Adrenal gland (tissue), 19 donors: ENCODE measurements at regions of chr6 and their contacts with region 1.

Region 1: GRCh38 chr6:14210663-14211561 is 93.3 kb downstream of the CD83 start:
- DNase-seq: peak; percentile 93 to 97 (median 94)
- H3K4me3 ChIP-seq: peak overlapping the region; percentile 46 to 77 (median 65)
- H3K27ac ChIP-seq: peak overlapping the region in 4 of 5 donors; percentile 48 to 86 (median 66)
- H3K4me1 ChIP-seq: peaks cover 7 to 20% of the 10 kb centered on the region in 2 donors
- H3K27me3 ChIP-seq: no peaks in the 10 kb centered on the region
- CTCF ChIP-seq: peak in 5 of 6 experiments; percentile 36 to 99 (median 77)
- POLR2A ChIP-seq: peak; percentile 53 to 54

Region 2: DNA sequence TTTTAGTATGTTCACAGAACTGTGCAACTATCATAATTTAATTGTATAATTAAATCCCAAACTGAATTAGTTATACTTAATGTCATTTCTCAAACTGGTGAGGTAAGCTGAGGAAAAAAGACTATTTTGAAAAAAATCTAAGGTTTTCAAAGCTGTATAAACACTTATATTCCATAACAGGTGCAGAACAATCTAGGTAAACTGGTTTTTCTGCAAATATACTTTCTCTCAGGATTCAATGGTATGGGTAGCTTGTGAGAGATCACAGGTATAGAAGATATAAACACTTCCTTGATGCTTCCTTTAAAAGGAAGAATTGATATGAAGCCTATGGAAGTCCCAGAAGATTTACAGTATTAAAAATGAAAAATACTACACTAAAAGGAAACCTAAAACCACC is 562.1 kb before region 1 on chr6:
- intact Hi-C with region 1: no loop called
- DNase-seq: no peak
- H3K4me3 ChIP-seq: no peak overlapping the region
- H3K27ac ChIP-seq: no peak overlapping the region
- H3K4me1 ChIP-seq: peaks cover 0 to 20% of the 10 kb centered on the region in 2 donors
- H3K27me3 ChIP-seq: no peaks in the 10 kb centered on the region
- CTCF ChIP-seq: no peak
- POLR2A ChIP-seq: no peak

Region 3: DNA sequence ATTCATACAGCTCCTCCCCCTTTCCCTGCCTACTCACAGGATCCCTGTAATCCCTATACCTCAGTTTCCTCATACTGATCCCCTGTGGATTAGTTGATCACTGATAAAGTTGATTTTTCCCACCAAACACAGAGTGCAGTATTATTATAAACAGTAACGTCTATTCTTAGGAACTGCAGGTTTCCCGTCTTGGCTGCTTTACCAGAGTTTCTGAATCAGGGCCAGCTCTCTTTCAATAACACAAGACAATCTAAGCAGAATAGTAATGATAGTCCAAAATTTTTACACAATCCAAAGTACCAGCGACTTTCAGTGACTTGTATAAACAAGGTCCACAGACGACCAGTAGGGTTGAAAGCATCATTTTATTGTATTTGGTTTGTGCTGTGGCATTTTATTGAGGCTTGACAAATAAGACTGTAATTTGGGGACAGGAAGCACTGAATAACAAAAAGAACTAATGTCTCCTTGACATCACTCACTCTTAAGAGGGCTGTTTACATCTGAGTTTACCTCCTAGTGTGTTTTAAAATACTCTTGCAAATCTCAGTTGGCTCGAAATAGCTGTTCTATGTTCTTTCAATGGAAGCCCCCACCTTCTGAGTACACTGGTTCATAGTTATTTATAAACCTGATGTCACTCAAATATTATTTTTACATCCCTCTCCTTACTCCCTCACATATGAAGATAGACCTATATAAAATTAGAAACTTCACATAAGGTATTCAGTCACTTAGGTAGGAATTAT is 1028.9 kb after region 1 on chr6:
- intact Hi-C with region 1: loop called in 1 of 2 experiments (anchors 10 kb)
- DNase-seq: no peak
- H3K4me3 ChIP-seq: no peak overlapping the region
- H3K27ac ChIP-seq: no peak overlapping the region
- H3K4me1 ChIP-seq: peaks cover 0 to 12% of the 10 kb centered on the region in 2 donors
- H3K27me3 ChIP-seq: no peaks in the 10 kb centered on the region
- CTCF ChIP-seq: no peak
- POLR2A ChIP-seq: no peak

Region 4: DNA sequence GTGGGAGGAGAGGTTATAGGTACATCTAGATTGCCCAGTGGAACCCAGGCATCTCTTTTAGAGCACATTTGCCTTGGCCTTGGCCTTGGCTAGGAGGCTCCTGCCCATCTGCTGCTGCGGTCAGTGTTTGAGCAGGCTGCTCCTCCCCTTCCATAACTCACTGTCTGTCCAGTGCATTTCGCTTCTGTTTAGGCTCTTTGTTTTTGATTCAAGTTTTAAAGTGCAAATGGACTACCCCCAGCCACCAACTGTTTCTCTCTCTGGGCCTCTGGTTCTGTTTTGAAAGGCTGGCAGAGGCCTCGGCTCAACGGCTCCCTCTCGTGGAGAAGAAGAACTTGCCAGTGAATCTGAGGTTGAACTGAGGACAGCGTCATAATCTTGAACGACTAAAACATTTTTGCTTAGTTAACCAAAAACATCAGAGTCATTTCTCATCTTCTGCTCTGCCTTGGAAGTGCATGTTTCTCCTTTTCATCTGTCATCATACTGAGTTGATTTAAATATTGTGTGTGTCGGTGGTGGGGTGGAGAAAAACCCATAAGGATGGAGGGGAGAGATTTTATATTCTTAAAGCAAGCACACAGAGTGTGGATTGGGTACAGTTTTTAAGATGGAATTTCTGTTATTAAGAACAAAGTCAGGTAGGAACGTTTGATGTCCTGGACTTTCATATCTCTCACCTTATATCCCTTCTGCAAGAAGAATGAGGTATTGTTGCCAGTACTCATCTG is 1280.5 kb after region 1 on chr6:
- intact Hi-C with region 1: loop called in 1 of 2 experiments (anchors 10 kb)
- DNase-seq: peak; percentile 76 to 93 (median 83)
- H3K4me3 ChIP-seq: no peak overlapping the region
- H3K27ac ChIP-seq: peak overlapping the region in 3 of 5 donors; percentile 9 to 50 (median 35)
- H3K4me1 ChIP-seq: peaks cover 0 to 15% of the 10 kb centered on the region in 2 donors
- H3K27me3 ChIP-seq: no peaks in the 10 kb centered on the region
- CTCF ChIP-seq: peak; percentile 88 to 95 (median 90)
- POLR2A ChIP-seq: peak in 1 of 2 donors; percentile 14

Region 5: GRCh38 chr6:15621203-15622044 is 1410.5 kb after region 1 on chr6:
- intact Hi-C with region 1: loop called in 1 of 2 experiments (anchors 10 kb)
- DNase-seq: peak; percentile 24 to 72 (median 32)
- H3K4me3 ChIP-seq: no peak overlapping the region
- H3K27ac ChIP-seq: peak overlapping the region in 2 of 5 donors; percentile 50 to 59
- H3K4me1 ChIP-seq: peaks cover 0 to 26% of the 10 kb centered on the region in 2 donors
- H3K27me3 ChIP-seq: no peaks in the 10 kb centered on the region
- CTCF ChIP-seq: no peak
- POLR2A ChIP-seq: no peak